ENCODE measurements at regions of chr10 and their contacts with region 1.

Region 1: DNA sequence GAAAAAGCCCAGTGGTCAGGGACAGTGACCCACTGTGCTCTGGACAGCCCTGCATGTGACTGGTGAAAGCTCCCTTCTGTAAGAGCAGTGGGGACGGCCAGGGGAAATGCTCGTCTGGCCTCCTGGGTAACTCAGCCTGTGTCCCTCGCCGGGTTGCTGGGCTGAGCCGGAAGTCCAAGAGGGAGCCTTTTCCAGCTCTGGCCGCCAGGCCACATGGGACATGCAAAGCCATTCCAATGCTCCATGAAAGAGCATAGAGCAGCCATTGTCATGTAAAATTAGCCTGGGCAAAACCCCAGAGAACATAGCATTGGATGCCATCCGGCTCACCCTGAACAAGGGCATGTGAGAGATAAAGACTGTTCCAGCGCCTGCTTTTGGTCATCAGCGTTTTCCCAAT is 64.9 kb upstream of the ADRB1 start:
- DNase-seq: no peak
- ATAC-seq: no peak
- H3K4me3 ChIP-seq: no peak overlapping the region
- H3K4me3 Mint-ChIP-seq: no peak overlapping the region
- H3K27ac ChIP-seq: no peak overlapping the region
- H3K27ac Mint-ChIP-seq: no peak overlapping the region
- H3K4me1 ChIP-seq: peaks cover 13% of the 10 kb centered on the region
- H3K4me1 Mint-ChIP-seq: peaks cover 8% of the 10 kb centered on the region
- H3K27me3 ChIP-seq: no peaks in the 10 kb centered on the region
- H3K27me3 Mint-ChIP-seq: peaks cover 12% of the 10 kb centered on the region
- CTCF ChIP-seq: no peak

Region 2: DNA sequence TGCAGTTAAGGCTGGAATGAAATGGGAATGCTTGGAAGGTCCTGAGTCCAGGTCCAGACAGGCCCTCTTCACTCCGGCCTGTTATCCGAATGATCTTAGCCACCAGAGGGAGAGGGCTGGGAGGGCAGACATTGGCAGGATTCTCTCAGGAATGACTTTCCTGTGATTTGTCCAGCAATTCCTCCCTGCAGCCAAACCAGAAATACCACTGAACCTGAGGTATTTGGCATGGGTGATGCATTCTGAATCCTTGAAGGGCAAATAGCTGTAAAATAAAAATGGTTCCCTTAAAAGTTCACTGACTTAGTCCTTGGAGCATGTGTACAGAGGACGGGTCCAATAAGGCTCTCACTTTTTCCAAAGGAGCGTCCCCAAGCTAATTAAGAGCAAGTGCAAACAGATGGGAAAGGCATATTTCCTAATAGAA is 503.4 kb before region 1 on chr10:
- CTCF ChIA-PET with region 1: no interaction called
- POLR2A ChIA-PET with region 1: no interaction called
- intact Hi-C with region 1: no loop called
- DNase-seq: no peak
- ATAC-seq: no peak
- H3K4me3 ChIP-seq: no peak overlapping the region
- H3K4me3 Mint-ChIP-seq: no peak overlapping the region
- H3K27ac ChIP-seq: no peak overlapping the region
- H3K27ac Mint-ChIP-seq: no peak overlapping the region
- H3K4me1 ChIP-seq: no peaks in the 10 kb centered on the region
- H3K4me1 Mint-ChIP-seq: no peaks in the 10 kb centered on the region
- H3K27me3 ChIP-seq: no peaks in the 10 kb centered on the region
- H3K27me3 Mint-ChIP-seq: no peaks in the 10 kb centered on the region
- CTCF ChIP-seq: no peak

Region 3: GRCh38 chr10:113941140-113941539 is 37.7 kb before region 1 on chr10:
- CTCF ChIA-PET with region 1: no interaction called
- POLR2A ChIA-PET with region 1: no interaction called
- intact Hi-C with region 1: loop called in 1 of 2 experiments (anchors 5 kb)
- DNase-seq: no peak
- ATAC-seq: no peak
- H3K4me3 ChIP-seq: no peak overlapping the region
- H3K4me3 Mint-ChIP-seq: no peak overlapping the region
- H3K27ac ChIP-seq: no peak overlapping the region
- H3K27ac Mint-ChIP-seq: no peak overlapping the region
- H3K4me1 ChIP-seq: no peaks in the 10 kb centered on the region
- H3K4me1 Mint-ChIP-seq: no peaks in the 10 kb centered on the region
- H3K27me3 ChIP-seq: no peaks in the 10 kb centered on the region
- H3K27me3 Mint-ChIP-seq: no peaks in the 10 kb centered on the region
- CTCF ChIP-seq: no peak

Measured in CD4-positive, alpha-beta T cell (primary cell).